Activated CD8-positive, alpha-beta T cell treated with anti-CD3 and anti-CD28 coated beads, Interleukin-2, amount 10 ng/mL, durations not matched to agents 7 days and 5 days (primary cell): ENCODE measurements at regions of chr22 and their contacts with region 1.

Region 1: GRCh38 chr22:38872172-38872830 is at the start of gene CBX6:
- DNase-seq: peak; percentile 95
- ATAC-seq: peak; percentile 78
- H3K4me3 Mint-ChIP-seq: peak within 1 kb of the TSS; percentile 91
- H3K27ac Mint-ChIP-seq: peak within 1 kb of the TSS; percentile 89
- H3K4me1 Mint-ChIP-seq: peaks cover 45% of the 10 kb centered on the region
- H3K27me3 Mint-ChIP-seq: peaks cover 22% of the 10 kb centered on the region
- total RNA-seq, gene CBX6: 61.4 to 61.8 TPM

Region 2: DNA sequence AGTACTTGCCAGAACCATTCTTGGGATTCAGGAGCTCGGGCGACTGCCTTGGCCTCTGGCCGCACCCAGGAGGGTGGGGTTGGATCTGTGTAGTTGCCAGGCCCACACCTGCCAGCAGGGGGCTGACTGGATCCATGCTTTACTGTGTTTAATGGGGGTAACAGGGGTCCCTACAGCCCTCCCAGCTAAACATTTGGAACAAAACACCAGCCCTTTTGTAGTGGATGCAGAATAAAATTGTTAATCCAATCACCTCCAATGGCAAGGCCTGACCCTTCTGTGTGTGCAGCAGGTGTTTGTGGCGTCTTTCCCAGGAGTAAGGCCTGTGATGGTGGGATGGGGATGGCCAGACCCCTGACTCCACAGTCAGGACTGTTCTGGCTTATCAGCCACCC is 139.0 kb before region 1 on chr22:
- CTCF ChIA-PET with region 1: no interaction called
- POLR2A ChIA-PET with region 1: no interaction called
- DNase-seq: peak; percentile 74
- ATAC-seq: peak; percentile 59
- H3K4me3 Mint-ChIP-seq: peak overlapping the region; percentile 18
- H3K27ac Mint-ChIP-seq: peak overlapping the region; percentile 85
- H3K4me1 Mint-ChIP-seq: peaks cover 45% of the 10 kb centered on the region
- H3K27me3 Mint-ChIP-seq: no peaks in the 10 kb centered on the region

Region 3: DNA sequence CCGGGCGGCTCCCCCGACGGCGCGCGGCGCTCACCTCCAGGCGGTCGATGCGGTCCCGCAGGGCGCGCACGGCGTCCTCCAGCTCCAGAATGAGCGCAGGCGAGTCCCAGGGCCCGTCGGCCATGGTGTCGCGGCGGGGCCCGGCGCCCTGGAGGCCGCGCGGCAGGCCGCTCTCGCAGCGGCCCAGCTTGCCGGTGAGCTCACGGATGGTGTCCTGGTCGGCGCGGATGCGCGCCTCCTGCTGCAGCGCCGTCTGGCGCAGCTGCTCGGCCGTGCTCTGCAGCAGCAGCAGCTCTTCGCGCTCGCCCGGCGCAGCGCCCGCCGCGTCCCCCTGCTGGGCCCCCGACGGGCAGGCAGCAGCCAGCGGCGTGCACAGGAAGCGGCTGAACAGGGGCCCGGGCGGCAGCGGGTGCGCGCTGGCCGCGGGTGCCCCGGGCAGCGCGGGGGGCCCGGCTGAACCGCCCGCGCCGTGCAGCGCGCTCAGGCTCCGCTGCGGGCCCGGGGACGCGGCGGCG is 29.0 kb before region 1 on chr22:
- CTCF ChIA-PET with region 1: interaction called, 16 read pairs
- POLR2A ChIA-PET with region 1: interaction called, 4 read pairs
- DNase-seq: peak; percentile 56
- ATAC-seq: peak; percentile 90
- H3K4me3 Mint-ChIP-seq: no peak overlapping the region
- H3K27ac Mint-ChIP-seq: no peak overlapping the region
- H3K4me1 Mint-ChIP-seq: peaks cover 7% of the 10 kb centered on the region
- H3K27me3 Mint-ChIP-seq: peaks cover 53% of the 10 kb centered on the region

Region 4: GRCh38 chr22:38953577-38954413 is 81.5 kb after region 1 on chr22:
- CTCF ChIA-PET with region 1: interaction called, 28 read pairs
- POLR2A ChIA-PET with region 1: interaction called, 3 read pairs
- DNase-seq: peak; percentile 70
- ATAC-seq: peak; percentile 85
- H3K4me3 Mint-ChIP-seq: peak overlapping the region; percentile 22
- H3K27ac Mint-ChIP-seq: peak overlapping the region; percentile 85
- H3K4me1 Mint-ChIP-seq: peaks cover 37% of the 10 kb centered on the region
- H3K27me3 Mint-ChIP-seq: peaks cover 2% of the 10 kb centered on the region

Region 5: DNA sequence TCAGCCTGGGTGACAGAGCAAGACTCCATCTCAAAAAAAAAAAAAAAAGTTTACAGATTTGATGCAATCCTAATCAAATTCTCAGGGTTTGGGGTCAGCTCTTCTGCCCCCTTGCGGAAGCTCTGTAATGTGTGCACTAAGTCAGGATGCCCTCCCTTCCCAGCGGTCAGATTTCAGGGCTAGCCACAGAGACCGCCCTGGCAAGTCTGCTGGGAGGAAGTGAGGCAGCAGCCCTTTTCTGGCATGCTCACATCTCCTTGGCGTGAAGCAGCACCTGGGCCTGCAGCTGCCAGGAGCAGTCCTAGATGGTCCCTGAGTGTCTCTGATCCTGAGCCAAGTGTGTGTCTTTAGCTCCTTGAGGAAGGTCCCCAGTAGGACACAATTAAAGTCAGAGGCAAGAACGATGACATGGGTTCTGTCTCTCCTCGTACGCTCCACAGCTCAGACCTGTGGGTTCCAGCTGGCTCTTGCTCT is 130.9 kb after region 1 on chr22:
- CTCF ChIA-PET with region 1: interaction called, 163 read pairs
- POLR2A ChIA-PET with region 1: interaction called, 6 read pairs
- DNase-seq: peak; percentile 91
- ATAC-seq: peak; percentile 93
- H3K4me3 Mint-ChIP-seq: no peak overlapping the region
- H3K27ac Mint-ChIP-seq: peak overlapping the region; percentile 63
- H3K4me1 Mint-ChIP-seq: peaks cover 13% of the 10 kb centered on the region
- H3K27me3 Mint-ChIP-seq: peaks cover 15% of the 10 kb centered on the region

Region 6: DNA sequence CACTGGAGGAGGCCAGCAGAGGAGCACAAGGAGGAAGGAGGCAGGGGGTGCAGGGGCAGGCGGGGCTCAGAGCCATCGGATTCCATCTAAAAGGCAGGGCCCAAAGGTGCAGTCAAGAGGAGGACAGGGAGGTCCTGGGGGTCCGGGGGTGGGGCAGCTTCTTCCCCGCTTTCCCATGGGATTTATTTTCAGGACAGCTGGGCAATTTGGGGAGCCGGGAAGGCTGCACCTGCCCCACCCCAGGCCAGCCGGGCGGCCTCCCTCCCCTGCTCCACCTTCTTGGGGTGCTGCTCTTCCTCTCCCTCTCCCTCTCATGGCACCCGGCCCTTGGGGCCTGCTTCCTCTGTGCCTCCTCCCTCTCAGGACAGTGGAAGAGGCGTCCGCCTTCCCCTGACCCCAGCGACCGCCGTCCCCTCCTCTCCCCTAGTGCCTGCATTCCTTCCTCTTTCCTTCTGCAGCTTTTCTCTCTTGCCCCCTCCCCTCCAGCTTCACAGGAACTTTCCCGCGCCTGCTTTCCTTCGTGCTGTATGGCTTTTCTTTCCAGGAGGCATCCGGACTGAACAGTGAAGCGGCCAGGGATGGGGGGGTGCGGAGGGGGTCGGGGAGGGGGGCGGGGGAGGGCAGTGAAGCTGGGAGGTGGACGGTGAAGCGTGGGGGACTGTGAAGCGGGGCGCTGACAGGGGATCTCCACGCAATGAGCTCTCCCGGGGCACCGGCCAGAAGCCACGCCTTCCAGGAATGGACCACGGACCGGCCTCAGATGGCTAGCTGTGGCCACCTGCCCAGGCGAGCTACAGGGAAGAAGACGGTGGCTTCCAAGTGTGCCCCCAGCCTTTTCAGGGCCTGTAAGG is 251.7 kb after region 1 on chr22:
- CTCF ChIA-PET with region 1: interaction called, 22 read pairs
- POLR2A ChIA-PET with region 1: no interaction called
- DNase-seq: no peak
- ATAC-seq: no peak
- H3K4me3 Mint-ChIP-seq: no peak overlapping the region
- H3K27ac Mint-ChIP-seq: no peak overlapping the region
- H3K4me1 Mint-ChIP-seq: peaks cover 14% of the 10 kb centered on the region
- H3K27me3 Mint-ChIP-seq: no peaks in the 10 kb centered on the region

Region 7: DNA sequence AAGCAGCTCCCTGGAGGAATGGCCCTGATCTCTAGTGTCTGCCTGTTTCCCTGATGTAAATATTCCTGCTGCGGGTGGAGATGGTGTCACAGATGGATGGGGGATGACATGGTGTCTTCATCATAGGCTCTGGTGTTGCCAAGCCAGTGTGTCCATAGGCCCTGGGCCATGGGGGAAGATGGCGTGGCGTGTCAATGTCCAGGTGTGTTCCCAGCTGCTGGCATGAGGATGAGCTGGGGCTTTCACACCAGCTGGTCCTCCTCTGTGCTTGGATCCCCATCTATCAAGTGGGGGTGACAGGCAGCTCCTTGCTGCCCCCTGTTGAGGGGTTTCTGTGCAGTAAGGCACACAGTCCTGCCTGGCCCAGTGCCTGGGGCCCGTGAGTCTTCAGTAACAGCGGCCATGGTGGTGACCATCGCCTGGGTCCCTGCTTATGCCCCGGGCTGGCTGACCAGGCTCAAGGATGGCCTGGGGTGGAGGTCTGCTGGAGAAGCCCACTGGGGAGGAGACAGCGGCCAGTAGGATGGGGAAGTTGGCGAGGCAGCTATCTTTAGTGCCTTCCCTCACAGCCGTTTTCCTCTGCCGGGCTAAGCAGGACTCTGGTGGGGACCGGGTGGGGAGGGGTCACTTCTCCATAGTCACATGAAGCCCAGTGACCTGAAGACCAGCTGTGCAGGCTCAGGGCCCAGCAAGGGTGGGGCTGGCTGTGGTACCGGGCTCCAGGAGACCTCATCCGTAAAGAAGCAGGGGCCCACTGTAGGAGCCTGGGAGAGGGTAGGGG is 434.5 kb after region 1 on chr22:
- CTCF ChIA-PET with region 1: interaction called, 15 read pairs
- POLR2A ChIA-PET with region 1: no interaction called
- DNase-seq: peak; percentile 73
- ATAC-seq: peak; percentile 30
- H3K4me3 Mint-ChIP-seq: no peak overlapping the region
- H3K27ac Mint-ChIP-seq: no peak overlapping the region
- H3K4me1 Mint-ChIP-seq: peaks cover 16% of the 10 kb centered on the region
- H3K27me3 Mint-ChIP-seq: no peaks in the 10 kb centered on the region